ENCODE measurements at regions of chr1 and their contacts with region 1.

Region 1: GRCh38 chr1:160376525-160377131 is 9.8 kb downstream of the NHLH1 start:
- H3K4me3 ChIP-seq: no peak overlapping the region
- H3K27ac ChIP-seq: no peak overlapping the region
- H3K4me1 ChIP-seq: no peaks in the 10 kb centered on the region
- CTCF ChIP-seq: peak; percentile 91

Region 2: GRCh38 chr1:160085686-160086455 is 290.8 kb before region 1 on chr1:
- CTCF ChIA-PET with region 1: interaction called, 44 read pairs
- POLR2A ChIA-PET with region 1: no interaction called
- H3K4me3 ChIP-seq: no peak overlapping the region
- H3K27ac ChIP-seq: no peak overlapping the region
- H3K4me1 ChIP-seq: no peaks in the 10 kb centered on the region
- CTCF ChIP-seq: peak; percentile 82

Region 3: GRCh38 chr1:160193091-160193819 is 183.4 kb before region 1 on chr1:
- CTCF ChIA-PET with region 1: interaction called, 15 read pairs
- POLR2A ChIA-PET with region 1: no interaction called
- H3K4me3 ChIP-seq: no peak overlapping the region
- H3K27ac ChIP-seq: no peak overlapping the region
- H3K4me1 ChIP-seq: no peaks in the 10 kb centered on the region
- CTCF ChIP-seq: peak; percentile 90

Region 4: GRCh38 chr1:160307118-160307854 is 69.3 kb before region 1 on chr1:
- CTCF ChIA-PET with region 1: no interaction called
- POLR2A ChIA-PET with region 1: no interaction called
- H3K4me3 ChIP-seq: no peak overlapping the region
- H3K27ac ChIP-seq: no peak overlapping the region
- H3K4me1 ChIP-seq: no peaks in the 10 kb centered on the region
- CTCF ChIP-seq: no peak

Region 5: DNA sequence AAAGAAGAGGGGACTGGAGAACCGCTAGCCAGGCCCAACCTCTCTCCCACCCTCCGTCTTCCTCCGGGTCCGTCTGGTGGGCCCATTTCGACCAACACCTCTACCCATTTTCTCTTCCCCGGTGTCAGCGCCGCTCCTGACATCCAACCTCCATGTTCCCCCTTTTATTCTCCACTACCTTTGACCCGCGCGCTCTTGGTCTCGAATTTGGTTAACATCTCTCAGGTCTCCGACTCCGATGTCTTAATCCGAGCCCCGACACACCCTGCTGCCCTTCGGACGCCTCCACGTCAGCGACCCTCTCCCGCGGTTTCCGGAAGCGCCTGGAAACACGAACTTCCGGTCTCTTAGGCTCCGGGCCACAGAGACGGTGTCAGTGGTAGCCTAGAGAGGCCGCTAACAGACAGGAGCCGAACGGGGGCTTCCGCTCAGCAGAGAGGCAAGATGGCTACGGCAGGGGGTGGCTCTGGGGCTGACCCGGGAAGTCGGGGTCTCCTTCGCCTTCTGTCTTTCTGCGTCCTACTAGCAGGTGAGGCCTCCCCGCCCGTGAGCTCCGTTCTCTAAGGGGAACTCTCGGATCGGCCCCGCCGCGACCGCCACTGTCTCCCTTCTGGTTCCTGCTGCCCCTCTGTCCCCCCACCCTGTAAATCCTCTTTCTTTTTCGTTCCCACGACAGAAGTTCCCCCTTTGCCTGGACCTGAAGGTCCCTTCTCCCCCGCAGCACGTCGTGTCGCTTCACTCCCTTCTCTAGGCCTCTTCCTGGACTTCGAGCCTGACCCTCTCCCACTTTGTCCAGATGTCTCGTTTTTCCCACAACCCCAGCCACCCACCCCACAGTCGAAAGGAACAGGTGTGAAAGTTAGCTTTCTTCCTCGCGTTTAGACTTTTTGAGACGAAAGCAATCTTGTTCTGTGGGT is 33.4 kb before region 1 on chr1 and contains the starts of genes COPA and NCSTN:
- CTCF ChIA-PET with region 1: interaction called, 10 read pairs
- POLR2A ChIA-PET with region 1: interaction called, 3 read pairs
- H3K4me3 ChIP-seq: peak within 1 kb of the TSS; percentile 69
- H3K27ac ChIP-seq: peak within 1 kb of the TSS; percentile 59; the same call in 1 of the 2 replicates
- H3K4me1 ChIP-seq: no peaks in the 10 kb centered on the region; the same call in 1 of the 2 replicates
- CTCF ChIP-seq: peak; percentile 42; the same call in 1 of the 2 replicates

Region 6: GRCh38 chr1:160362168-160362957 is 14.3 kb before region 1 on chr1:
- CTCF ChIA-PET with region 1: interaction called, 175 read pairs
- POLR2A ChIA-PET with region 1: interaction called, 7 read pairs
- H3K4me3 ChIP-seq: no peak overlapping the region
- H3K27ac ChIP-seq: peak overlapping the region; percentile 29; the same call in 1 of the 2 replicates
- H3K4me1 ChIP-seq: 0 out of 2 replicates have a peak, but pooled peaks cover 2% of the 10 kb centered on the region
- CTCF ChIP-seq: no peak

Region 7: DNA sequence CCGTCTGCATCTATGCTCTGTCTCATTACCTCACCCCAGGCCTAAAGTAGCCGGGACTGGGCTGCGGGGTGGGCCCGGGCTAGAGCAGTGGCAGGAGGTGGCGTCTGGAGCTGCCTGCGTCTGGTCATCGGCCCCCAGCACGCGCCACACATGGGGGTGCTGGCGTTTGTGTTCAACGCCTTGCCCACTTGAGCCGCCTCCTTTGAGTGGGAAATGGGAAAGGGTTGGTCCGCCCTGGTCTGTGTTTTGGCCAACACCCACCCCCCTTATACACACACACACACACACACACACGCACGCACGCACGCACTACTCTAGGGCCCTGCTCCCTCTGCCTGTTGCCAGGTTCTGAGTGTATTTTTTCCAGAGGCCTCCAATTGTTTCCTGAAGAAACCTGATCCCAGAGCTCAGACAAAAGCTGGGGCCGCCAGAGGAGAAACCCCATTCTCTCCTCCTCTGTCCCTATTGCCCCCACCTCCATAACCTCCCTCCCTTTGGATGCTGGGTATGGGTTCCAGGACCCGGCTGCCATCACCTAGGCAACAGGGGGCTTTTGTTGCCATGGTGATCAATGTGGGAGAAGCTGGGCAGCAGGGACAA is 33.9 kb after region 1 on chr1:
- CTCF ChIA-PET with region 1: interaction called, 15 read pairs
- POLR2A ChIA-PET with region 1: no interaction called
- H3K4me3 ChIP-seq: no peak overlapping the region
- H3K27ac ChIP-seq: no peak overlapping the region
- H3K4me1 ChIP-seq: no peaks in the 10 kb centered on the region
- CTCF ChIP-seq: no peak